ENCODE measurements at regions of chr3 and their contacts with region 1.

Region 1: DNA sequence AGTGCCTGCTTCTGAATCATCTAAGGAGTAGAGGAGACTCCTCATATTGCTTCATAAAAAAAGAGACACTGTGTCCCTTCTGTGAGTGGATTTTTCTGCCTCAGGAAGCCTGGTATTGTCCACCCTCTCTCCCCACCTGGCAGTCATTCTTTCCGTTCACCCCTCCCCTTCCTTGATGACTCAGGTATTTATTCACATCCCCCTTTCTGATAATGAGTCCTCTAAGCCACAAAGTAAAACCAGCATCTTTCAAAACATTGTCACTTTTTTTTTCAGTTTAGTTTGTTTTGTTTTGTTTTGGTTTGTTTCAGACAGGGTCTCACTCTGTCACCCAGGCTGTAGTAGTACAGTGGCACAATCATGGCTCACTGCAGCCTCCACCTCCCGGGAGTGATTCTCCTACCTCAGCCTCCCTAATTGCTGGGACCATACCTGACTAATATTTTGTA is 65.2 kb upstream of the UBE2E1 start:
- DNase-seq: peak; percentile 13
- H3K4me3 Mint-ChIP-seq: no peak overlapping the region
- H3K27ac Mint-ChIP-seq: peak overlapping the region; percentile 9
- H3K4me1 Mint-ChIP-seq: peaks cover 12% of the 10 kb centered on the region
- H3K27me3 Mint-ChIP-seq: peaks cover 22% of the 10 kb centered on the region

Region 2: DNA sequence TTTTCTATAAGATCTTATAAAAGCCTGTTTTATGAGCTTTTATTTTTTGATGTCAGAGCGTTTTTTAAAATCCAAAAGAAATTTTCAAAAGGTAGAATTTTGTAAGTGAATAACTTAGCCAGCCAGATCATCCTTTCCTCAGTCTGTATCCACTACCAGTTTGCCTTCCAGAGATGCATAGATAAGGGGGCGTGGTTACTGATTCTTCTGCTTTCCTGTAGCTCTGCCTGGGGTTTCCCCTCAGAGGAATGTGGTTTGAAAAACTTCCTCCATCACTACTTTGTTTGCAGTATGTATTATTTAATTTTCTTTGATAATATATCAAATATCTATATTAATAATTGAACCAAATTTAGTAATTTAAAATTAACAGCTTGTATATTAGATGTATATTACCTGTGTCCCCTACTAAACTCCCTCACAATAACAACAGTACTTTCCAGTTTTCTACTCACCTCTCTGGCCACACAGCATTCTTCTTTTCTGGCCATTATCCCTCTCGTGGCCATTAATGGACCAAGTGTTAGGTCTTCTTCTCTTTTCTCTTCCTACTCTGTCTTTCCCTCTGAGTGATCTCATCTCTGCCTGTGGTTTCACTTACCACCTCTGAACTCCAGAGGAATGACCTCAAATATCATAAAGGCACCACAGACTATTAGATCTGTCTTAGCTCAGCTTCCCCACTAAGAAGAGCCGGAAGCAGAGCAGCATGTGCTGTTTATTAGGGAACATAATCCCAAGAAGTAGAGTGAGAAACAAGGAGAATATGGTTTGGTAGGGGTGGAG is 297.8 kb before region 1 on chr3:
- intact Hi-C with region 1: loop called (anchors 5 kb)
- DNase-seq: no peak
- H3K4me3 Mint-ChIP-seq: no peak overlapping the region
- H3K27ac Mint-ChIP-seq: no peak overlapping the region
- H3K4me1 Mint-ChIP-seq: peaks cover 32% of the 10 kb centered on the region
- H3K27me3 Mint-ChIP-seq: peaks cover 8% of the 10 kb centered on the region

Region 3: DNA sequence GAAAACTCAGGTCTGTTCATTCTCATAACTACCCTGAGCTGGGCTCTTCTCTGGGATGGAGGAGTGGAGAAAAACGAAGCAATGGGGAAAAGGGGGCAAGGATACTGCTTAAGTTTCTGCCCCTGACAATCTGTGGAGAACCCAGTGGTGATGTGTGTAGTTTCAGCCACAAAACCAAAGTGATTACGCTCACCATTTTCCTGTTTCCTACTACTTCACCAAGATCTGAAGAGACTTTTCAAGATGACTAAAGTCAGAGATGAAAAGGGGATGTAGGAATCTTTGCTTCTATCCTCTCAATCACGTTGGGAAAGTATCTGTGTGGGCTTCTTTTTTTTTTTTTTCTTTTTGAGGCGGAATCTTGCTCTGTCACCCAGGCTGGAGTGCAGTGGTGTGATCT is 57.0 kb after region 1 on chr3:
- intact Hi-C with region 1: loop called (anchors 5 kb)
- DNase-seq: no peak
- H3K4me3 Mint-ChIP-seq: no peak overlapping the region
- H3K27ac Mint-ChIP-seq: no peak overlapping the region
- H3K4me1 Mint-ChIP-seq: peaks cover 9% of the 10 kb centered on the region
- H3K27me3 Mint-ChIP-seq: peaks cover 32% of the 10 kb centered on the region